ENCODE measurements at regions of chr5 and their contacts with region 1.

Region 1: GRCh38 chr5:31232273-31232888 is 38.9 kb downstream of the CDH6 start:
- H3K4me3 ChIP-seq: no peak overlapping the region
- H3K27ac ChIP-seq: no peak overlapping the region
- H3K4me1 ChIP-seq: no peaks in the 10 kb centered on the region
- CTCF ChIP-seq: no peak

Region 2: GRCh38 chr5:30401479-30402058 is 830.8 kb before region 1 on chr5:
- CTCF ChIA-PET with region 1: interaction called, 13 read pairs
- POLR2A ChIA-PET with region 1: no interaction called
- H3K4me3 ChIP-seq: no peak overlapping the region
- H3K27ac ChIP-seq: no peak overlapping the region
- H3K4me1 ChIP-seq: no peaks in the 10 kb centered on the region
- CTCF ChIP-seq: no peak

Region 3: DNA sequence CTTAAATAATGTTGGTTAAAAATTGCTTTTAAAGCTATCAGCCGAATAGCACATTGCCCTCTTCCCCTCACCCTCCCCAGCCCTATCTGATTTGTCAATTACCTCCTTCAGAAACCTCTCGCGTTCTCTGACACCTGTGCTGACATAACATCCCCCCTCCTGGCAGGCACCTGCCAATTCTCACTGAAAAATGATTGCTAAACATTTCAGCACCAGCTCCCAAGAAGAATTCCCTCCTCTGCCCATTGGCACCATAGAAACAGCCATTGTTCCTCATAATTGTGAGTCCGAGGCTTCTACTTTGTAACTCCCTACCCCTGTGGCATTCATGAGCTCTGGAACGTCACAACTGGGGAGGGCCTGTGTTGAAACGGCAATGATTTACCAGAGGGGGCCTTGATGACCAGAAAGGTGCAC is 18.7 kb before region 1 on chr5:
- CTCF ChIA-PET with region 1: interaction called, 60 read pairs
- POLR2A ChIA-PET with region 1: no interaction called
- H3K4me3 ChIP-seq: no peak overlapping the region
- H3K27ac ChIP-seq: no peak overlapping the region
- H3K4me1 ChIP-seq: no peaks in the 10 kb centered on the region
- CTCF ChIP-seq: no peak

Region 4: GRCh38 chr5:31244921-31245320 is 12.5 kb after region 1 on chr5:
- CTCF ChIA-PET with region 1: interaction called, 37 read pairs
- POLR2A ChIA-PET with region 1: no interaction called
- H3K4me3 ChIP-seq: no peak overlapping the region
- H3K27ac ChIP-seq: no peak overlapping the region
- H3K4me1 ChIP-seq: no peaks in the 10 kb centered on the region
- CTCF ChIP-seq: no peak

Region 5: DNA sequence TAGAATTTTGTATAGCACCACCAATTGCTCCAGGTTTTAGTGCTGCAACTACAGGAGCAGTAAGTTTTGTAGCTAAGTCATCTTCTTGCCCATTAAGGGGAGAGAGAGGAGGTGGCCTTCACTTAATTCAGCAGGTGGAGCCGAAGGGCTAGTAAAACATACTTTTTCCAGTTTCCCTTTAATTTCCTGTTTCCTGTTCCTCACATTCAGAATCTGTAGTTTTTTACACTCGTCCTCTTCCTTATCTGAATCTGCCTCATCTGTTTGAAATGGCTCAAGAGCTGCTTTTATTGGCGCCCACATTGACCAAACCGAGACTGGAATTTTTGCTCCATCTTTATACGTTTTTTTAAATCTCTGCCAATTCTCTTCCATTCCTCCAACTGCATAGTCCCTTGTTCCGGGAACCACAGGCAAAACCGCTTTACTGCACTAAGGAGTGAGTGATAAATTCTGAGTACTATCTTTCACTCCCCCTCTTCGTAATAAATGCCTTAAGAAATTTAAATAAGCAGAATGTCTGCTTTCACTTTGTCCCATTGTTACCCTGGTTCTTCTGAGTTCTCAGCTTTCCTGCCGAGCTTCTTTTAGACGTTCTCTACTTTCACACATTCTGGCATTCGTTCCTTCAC is 165.7 kb after region 1 on chr5:
- CTCF ChIA-PET with region 1: no interaction called
- POLR2A ChIA-PET with region 1: no interaction called
- H3K4me3 ChIP-seq: no peak overlapping the region
- H3K27ac ChIP-seq: no peak overlapping the region
- H3K4me1 ChIP-seq: no peaks in the 10 kb centered on the region
- CTCF ChIP-seq: no peak

Measured in HEK293 (cell line).